ENCODE measurements at regions of chr7 and their contacts with region 1.

Region 1: DNA sequence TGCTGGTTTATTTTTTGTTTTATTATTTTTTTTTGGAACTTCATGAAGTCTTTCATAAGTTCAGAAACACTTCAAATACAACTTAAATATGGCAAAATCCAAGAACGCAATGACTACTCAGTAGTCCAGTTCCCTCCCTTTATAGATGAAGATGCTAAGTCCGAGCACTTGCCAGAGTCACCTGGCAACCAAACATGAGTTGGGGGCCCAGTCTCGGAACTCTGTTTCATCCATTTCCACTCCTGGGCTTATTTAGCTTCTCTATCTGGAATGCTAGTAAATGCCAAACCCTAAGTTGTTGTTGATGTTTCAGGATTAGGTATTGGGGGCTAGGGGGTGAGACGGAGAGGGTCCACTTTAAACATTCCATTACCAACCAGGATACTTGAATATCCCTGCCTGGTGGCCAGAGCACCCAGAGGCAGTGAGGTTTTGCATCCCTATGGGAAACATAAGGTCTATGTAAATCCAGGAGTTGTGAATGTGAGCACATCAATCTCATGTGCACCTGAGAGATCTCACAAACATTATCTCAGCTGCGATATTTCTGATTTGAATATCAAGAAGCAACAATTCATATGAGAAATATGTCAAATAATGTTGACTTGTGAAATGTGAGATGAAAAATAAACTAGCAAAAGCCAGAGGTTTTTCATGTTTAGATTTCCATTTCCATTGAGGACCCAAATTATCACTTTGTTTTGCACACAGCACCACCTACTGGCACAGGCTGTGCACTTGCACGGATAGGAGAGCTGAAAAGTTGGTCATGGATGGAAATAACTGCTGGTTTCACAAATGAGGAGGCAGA is 129.3 kb downstream of the PKD1L1 start:
- DNase-seq: peak; percentile 72 to 82
- ATAC-seq: peak; percentile 87 to 88; a peak in 5 of 6 replicates
- H3K4me3 ChIP-seq: no peak overlapping the region
- H3K27ac ChIP-seq: peak overlapping the region; percentile 79 to 90
- H3K4me1 ChIP-seq: peaks cover 48% of the 10 kb centered on the region
- CTCF ChIP-seq: peak; percentile 97
- EP300 ChIP-seq: no peak; a peak in 1 of 5 replicates
- POLR2A ChIP-seq: no peak
- RAD21 ChIP-seq: peak; percentile 99

Region 2: GRCh38 chr7:47557169-47557985 is 261.6 kb before region 1 on chr7:
- CTCF ChIA-PET with region 1: interaction called, 19 read pairs
- POLR2A ChIA-PET with region 1: no interaction called
- DNase-seq: peak; percentile 76 to 86
- ATAC-seq: peak; percentile 71 to 81
- H3K4me3 ChIP-seq: no peak overlapping the region
- H3K27ac ChIP-seq: peak overlapping the region; percentile 74 to 84
- H3K4me1 ChIP-seq: peaks cover 88% of the 10 kb centered on the region
- CTCF ChIP-seq: no peak
- EP300 ChIP-seq: 0 out of 5 replicates have a peak, but pooled peaks of 1 of the 2 experiments have one; percentile 33
- POLR2A ChIP-seq: no peak
- RAD21 ChIP-seq: no peak

Region 3: DNA sequence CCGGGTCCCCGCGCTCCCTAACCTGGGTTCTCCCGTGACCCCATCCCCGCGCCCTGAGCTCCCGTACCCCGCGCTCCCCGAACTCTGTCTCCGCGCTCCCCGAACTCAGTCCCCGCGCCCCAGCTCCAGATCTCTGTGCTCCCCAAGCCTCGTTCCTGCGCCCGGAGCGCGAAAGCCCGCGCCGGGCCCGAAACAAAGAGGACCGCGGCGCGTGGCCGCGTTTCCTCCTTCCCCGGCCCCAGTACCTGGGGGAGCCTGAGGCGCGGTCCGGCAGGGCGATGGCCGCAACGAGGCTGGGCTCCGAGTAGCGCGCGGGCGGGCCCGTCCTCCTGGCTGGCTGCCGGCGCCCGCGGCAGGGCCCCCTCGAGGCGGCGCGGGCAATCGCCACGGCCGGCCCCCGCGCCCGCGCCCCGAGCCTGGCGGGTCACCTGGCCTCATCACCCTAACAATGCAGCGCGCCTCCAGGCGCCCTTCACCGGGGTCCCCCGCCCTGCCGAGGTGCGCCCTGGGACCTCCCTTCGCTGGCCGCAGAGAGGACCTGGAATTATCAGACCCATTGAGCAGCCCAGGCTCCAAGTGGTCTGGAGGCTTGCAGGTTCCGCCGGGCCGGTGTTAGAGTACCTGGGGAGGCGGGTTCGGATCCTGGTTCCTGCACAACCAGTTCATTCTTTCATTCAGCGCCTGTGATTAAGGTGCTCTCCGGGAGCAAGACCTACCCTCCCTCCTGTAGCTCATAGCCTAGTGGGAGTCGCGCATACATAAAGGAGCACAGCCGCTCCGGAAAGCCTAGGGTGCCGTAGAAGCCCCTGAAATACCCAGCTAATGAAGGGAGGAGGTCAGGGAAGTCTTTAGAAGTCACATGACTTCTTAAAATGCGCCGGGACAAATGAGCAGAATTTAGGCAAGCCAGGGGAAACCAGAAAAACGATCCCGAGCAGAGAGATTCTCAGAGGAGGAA is 236.9 kb before region 1 on chr7 and contains the start of gene TNS3:
- CTCF ChIA-PET with region 1: interaction called, 13 read pairs
- POLR2A ChIA-PET with region 1: interaction called, 4 read pairs
- DNase-seq: peak in 1 of 2 experiments; percentile 72
- ATAC-seq: peak; percentile 37 to 67
- H3K4me3 ChIP-seq: peak within 1 kb of the TSS; percentile 83
- H3K27ac ChIP-seq: peak within 1 kb of the TSS; percentile 99 to 100
- H3K4me1 ChIP-seq: peaks cover 63% of the 10 kb centered on the region
- CTCF ChIP-seq: peak; percentile 39
- EP300 ChIP-seq: no peak
- POLR2A ChIP-seq: peak; percentile 21
- RAD21 ChIP-seq: peak; percentile 1 to 48; a peak in 4 of 5 replicates
- polyA plus RNA-seq, gene TNS3: 134 and 137 TPM in 2 replicates

Region 4: DNA sequence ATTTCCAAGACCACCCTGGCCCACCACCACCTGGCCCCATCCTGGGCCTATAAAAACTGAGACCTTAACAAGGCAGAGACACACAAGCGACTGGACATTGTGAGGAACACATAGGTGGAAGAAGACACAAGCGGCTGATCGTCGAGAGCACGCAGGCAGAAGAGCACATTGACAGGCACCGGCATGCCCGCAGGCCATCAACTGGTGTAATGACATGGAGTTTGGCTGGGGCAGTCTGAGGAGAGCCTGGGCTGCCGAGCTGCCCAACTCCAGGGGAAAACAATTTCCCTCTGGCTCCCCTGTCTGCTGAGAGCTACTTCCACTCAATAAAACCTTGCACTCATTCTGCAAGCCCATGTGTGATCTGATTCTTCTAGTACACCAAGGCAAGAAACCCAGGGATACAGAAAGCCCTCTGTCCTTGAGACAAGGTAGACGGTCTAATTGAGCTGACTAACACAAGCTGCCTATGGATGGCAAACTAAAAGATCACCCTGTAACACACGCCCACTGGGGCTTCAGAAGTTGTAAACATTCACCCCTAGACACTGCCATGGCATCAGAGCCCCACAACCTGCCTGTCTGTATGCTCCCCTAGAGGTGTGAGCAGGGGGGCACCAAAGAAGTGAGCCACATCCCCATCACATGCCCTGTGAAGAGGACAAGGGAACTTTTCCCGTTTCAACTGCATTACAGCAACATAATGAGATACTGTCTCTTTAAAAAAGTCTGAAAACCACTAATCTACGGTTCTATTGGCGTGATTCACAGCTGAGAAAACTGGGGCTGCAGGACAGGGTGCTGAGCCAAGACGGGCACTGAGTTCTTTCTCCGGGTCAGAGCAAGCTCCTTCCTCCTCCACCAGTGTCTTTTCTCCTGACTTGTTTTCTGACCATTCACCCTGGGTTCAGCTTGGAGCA is 218.5 kb before region 1 on chr7:
- CTCF ChIA-PET with region 1: interaction called, 10 read pairs
- POLR2A ChIA-PET with region 1: interaction called, 4 read pairs
- DNase-seq: peak in 1 of 2 experiments; percentile 87
- ATAC-seq: peak; percentile 70 to 71
- H3K4me3 ChIP-seq: peak overlapping the region; percentile 19; the same call in 2 of the 3 replicates
- H3K27ac ChIP-seq: peak overlapping the region; percentile 99
- H3K4me1 ChIP-seq: peaks cover 95% of the 10 kb centered on the region
- CTCF ChIP-seq: no peak
- EP300 ChIP-seq: no peak
- POLR2A ChIP-seq: 0 out of 2 replicates have a peak, but pooled peaks have one; percentile 20
- RAD21 ChIP-seq: peak; percentile 9 to 17; a peak in 3 of 5 replicates

Region 5: DNA sequence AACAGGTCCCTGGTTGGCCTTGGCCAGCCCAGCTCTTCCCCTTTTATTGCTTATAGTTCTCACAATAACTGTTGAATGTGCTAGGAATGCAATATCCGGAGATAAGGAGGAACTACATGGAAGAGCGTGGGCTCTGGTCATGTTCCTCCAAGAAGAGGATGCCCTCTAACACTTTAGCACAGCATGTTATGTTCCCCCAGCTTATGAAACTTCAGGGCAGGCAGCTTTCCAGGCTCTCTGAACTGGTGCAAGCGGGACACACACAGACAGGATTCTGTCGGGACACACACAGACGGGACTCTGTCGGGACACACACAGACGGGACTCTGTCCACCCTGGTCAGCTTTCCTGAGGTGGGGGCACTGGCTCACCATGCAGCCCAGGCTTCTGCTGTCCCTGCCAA is 12.3 kb before region 1 on chr7:
- CTCF ChIA-PET with region 1: interaction called, 28 read pairs
- POLR2A ChIA-PET with region 1: no interaction called
- DNase-seq: no peak
- ATAC-seq: peak in 1 of 2 experiments; percentile 15; a peak in 3 of 6 replicates
- H3K4me3 ChIP-seq: no peak overlapping the region
- H3K27ac ChIP-seq: peak overlapping the region; percentile 37 to 76; a peak in 5 of 6 replicates
- H3K4me1 ChIP-seq: peaks cover 12% of the 10 kb centered on the region
- CTCF ChIP-seq: no peak
- EP300 ChIP-seq: no peak
- POLR2A ChIP-seq: no peak
- RAD21 ChIP-seq: no peak

Region 6: GRCh38 chr7:48301201-48301600 is 482.2 kb after region 1 on chr7:
- CTCF ChIA-PET with region 1: no interaction called
- POLR2A ChIA-PET with region 1: no interaction called
- DNase-seq: no peak
- ATAC-seq: no peak
- H3K4me3 ChIP-seq: no peak overlapping the region
- H3K27ac ChIP-seq: no peak overlapping the region
- H3K4me1 ChIP-seq: no peaks in the 10 kb centered on the region
- CTCF ChIP-seq: no peak
- EP300 ChIP-seq: no peak
- POLR2A ChIP-seq: no peak
- RAD21 ChIP-seq: no peak